Lower lobe of right lung (tissue), 2 donors: ENCODE measurements at regions of chr18 and their contacts with region 1.

Region 1: GRCh38 chr18:77210249-77210648 is 39.4 kb upstream of the GALR1 start:
- DNase-seq: no peak
- ATAC-seq: peak in 1 of 2 donors; percentile 8
- H3K4me3 ChIP-seq: no peak overlapping the region
- H3K27ac ChIP-seq: no peak overlapping the region
- H3K4me1 ChIP-seq: peaks cover 57% of the 10 kb centered on the region
- H3K27me3 ChIP-seq: no peaks in the 10 kb centered on the region
- CTCF ChIP-seq: no peak

Region 2: GRCh38 chr18:77013811-77014521 is 196.3 kb before region 1 on chr18:
- intact Hi-C with region 1: loop called (anchors 10 kb)
- DNase-seq: peak; percentile 81
- ATAC-seq: peak; percentile 94 to 96
- H3K4me3 ChIP-seq: no peak overlapping the region
- H3K27ac ChIP-seq: peak overlapping the region; percentile 79
- H3K4me1 ChIP-seq: peaks cover 46% of the 10 kb centered on the region
- H3K27me3 ChIP-seq: no peaks in the 10 kb centered on the region
- CTCF ChIP-seq: no peak

Region 3: DNA sequence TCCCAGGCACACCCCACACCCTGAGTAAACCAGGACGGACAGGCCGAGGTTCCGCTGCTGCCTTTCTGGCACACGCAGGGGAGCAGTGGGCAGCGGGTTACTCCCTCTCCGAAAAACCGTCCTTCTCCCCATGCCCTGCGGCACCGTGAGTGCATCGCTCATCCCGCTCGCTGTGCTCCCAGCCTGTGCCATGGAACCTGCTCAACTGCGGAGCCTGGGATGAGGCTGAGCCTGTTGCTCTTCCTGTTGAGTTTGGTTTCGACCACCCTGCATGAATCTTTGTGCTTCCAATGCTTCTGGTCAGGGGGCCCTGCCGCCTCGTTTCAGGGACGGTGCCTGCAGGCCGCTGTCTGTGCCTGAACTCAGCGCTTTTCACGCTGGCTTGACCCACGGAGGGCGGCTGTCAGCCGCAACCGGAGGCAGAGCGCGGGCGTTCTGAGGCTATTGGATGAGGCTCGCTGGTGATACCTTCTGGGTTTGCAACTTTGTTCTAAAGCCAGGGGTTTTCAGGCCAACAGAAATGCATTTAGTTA is 184.4 kb before region 1 on chr18:
- intact Hi-C with region 1: no loop called
- DNase-seq: no peak
- ATAC-seq: no peak
- H3K4me3 ChIP-seq: no peak overlapping the region
- H3K27ac ChIP-seq: no peak overlapping the region
- H3K4me1 ChIP-seq: no peaks in the 10 kb centered on the region
- H3K27me3 ChIP-seq: no peaks in the 10 kb centered on the region
- CTCF ChIP-seq: no peak

Region 4: GRCh38 chr18:77147418-77147852 is 62.8 kb before region 1 on chr18:
- intact Hi-C with region 1: no loop called
- DNase-seq: no peak
- ATAC-seq: peak in 1 of 2 donors; percentile 60
- H3K4me3 ChIP-seq: no peak overlapping the region
- H3K27ac ChIP-seq: no peak overlapping the region
- H3K4me1 ChIP-seq: no peaks in the 10 kb centered on the region
- H3K27me3 ChIP-seq: no peaks in the 10 kb centered on the region
- CTCF ChIP-seq: no peak

Region 5: DNA sequence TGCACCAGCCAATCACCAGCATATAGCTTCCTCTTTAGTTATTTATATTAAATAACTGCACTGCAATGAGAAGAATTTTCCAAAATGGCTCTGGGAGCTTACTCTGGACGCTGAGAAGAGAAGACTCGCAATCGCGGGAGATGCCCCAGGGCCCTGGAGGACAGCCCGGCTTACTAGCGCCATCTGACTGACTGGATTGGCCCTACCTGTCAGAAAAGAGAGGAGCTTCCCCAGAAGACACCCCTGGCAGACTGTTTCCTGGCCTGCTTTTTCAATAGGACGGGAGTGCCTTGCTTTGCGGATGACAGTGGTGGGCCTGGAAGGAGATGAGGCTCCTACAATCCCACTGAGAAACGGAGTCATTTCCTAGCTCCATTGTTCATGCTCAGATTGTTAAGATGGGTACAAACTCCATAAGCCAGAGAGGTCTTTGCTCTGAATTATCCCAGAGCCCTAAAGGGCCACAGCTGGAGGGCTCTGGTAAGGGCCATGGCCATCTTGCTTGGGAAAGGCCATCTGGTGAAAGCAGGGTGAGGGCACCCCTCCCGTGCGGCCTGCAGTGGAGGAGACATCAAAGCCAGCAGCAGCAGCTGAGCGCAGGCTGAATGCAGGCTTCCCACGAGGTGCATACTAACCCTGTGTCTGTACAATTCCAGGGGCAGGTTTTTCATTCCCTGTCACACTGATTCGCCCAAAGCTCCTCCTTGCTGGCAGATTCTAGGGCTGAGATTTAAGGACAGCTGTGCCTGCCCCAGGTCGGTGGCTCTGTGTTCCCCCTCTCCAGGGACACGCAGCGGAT is 131.5 kb after region 1 on chr18:
- intact Hi-C with region 1: no loop called
- DNase-seq: no peak
- ATAC-seq: no peak
- H3K4me3 ChIP-seq: no peak overlapping the region
- H3K27ac ChIP-seq: no peak overlapping the region
- H3K4me1 ChIP-seq: no peaks in the 10 kb centered on the region
- H3K27me3 ChIP-seq: peaks cover 3% of the 10 kb centered on the region
- CTCF ChIP-seq: no peak